ENCODE measurements at regions of chr17 and their contacts with region 1.

Region 1: DNA sequence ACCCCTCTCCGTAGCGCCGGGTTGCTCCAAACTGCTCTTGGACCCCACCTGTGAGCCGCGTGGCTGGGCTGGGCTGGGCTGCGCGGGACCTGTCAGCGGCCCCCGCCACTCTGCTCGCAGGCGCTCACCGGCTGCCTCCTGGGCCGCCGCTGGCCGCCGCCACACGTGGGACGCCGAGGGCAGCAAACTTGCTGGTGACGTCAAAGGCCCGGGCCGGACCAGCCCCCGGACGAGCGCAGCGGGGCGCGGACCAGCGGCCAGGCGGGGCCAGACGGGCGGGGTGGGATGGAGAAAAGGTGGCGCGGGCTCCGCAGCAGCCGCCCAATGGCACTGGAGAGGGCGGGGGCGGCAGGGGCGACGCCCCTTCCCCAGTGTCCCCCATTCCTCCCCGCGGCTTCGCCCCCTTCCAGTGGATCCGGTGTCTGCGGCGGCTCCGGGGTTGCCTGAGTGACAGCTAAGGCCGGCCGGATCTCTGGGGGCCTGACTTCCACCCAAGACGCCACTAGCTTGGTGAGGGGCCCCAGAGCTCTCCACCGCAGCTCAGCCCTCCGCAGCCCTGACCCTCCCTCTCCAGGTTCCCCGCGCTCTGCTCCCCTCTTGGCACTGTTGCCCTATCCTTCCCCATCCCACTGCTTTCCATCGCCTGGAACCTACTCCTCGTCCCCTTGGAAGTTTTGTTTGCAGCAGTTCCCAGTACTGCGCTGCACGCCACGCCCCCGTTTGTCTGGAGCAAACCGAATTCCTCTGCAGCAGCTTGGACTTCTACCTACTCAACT is at the start of gene HS3ST3A1:
- DNase-seq: peak; percentile 86

Region 2: GRCh38 chr17:14922411-14922810 is 1320.4 kb after region 1 on chr17:
- in situ Hi-C with region 1: loop called (anchors 25 kb)
- DNase-seq: no peak

Measured in KBM-7 (cell line).